ENCODE measurements at regions of chr6 and their contacts with region 1.

Region 1: GRCh38 chr6:135002229-135002844 is 52.3 kb downstream of the HBS1L start:
- DNase-seq: no peak
- ATAC-seq: peak; percentile 64
- H3K4me3 ChIP-seq: no peak overlapping the region; the same call in 1 of the 2 replicates
- H3K27ac ChIP-seq: peak overlapping the region; percentile 88
- H3K4me1 ChIP-seq: peaks cover 11% of the 10 kb centered on the region
- H3K27me3 ChIP-seq: no peaks in the 10 kb centered on the region
- CTCF ChIP-seq: peak; percentile 42 to 45 (median 44); a peak in 4 of 6 replicates
- EP300 ChIP-seq: no peak
- POLR2A ChIP-seq: no peak
- RAD21 ChIP-seq: peak; percentile 65

Region 2: DNA sequence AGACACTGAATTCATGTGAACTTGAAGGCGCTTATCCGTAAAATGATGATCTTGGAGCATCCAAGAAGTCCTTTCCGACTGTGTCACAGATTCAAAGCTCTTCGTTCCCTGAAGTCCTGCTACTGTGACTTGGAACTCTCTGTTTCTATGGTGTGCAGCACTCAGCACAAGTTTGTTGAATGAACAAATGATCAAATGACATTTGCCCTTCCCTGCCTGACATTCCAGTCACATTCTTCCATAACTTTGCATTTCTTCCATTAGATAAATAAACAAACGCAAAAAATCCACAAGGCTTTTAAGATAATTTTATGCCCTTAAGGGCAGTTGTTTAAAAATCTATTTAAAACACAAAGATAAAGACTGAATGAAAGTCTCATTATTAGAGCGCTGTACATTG is 724.3 kb before region 1 on chr6:
- CTCF ChIA-PET with region 1: no interaction called
- POLR2A ChIA-PET with region 1: no interaction called
- RAD21 ChIA-PET with region 1: no interaction called
- SMC1A ChIA-PET with region 1: no interaction called
- in situ Hi-C with region 1: no loop called
- intact Hi-C with region 1: no loop called
- DNase-seq: no peak
- ATAC-seq: no peak
- H3K4me3 ChIP-seq: no peak overlapping the region
- H3K27ac ChIP-seq: no peak overlapping the region
- H3K4me1 ChIP-seq: peaks cover 3% of the 10 kb centered on the region; the same call in 1 of the 2 replicates
- H3K27me3 ChIP-seq: no peaks in the 10 kb centered on the region
- CTCF ChIP-seq: no peak
- EP300 ChIP-seq: no peak
- POLR2A ChIP-seq: no peak
- RAD21 ChIP-seq: no peak

Region 3: DNA sequence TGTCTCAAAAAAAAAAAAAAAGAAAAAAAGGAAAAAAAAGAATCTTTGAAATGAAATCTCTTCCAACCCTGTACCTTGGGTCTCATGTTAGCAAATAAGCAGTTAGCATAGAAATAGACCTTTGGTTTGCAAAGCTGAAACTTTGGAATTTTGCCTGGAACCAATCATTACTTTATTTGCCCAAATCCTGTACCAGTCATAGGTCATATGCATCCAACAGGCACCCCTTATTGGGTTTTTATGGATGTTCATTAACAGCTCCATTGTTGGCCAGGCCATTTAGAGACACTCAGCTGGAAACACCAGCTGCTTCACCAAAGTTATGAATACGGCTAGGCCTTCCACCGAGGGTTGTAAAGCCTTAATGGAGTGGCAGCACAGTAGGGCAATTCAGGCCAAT is 105.4 kb before region 1 on chr6:
- CTCF ChIA-PET with region 1: no interaction called
- POLR2A ChIA-PET with region 1: no interaction called
- RAD21 ChIA-PET with region 1: no interaction called
- SMC1A ChIA-PET with region 1: no interaction called
- in situ Hi-C with region 1: no loop called
- intact Hi-C with region 1: no loop called
- DNase-seq: no peak
- ATAC-seq: no peak
- H3K4me3 ChIP-seq: no peak overlapping the region
- H3K27ac ChIP-seq: no peak overlapping the region
- H3K4me1 ChIP-seq: no peaks in the 10 kb centered on the region
- H3K27me3 ChIP-seq: no peaks in the 10 kb centered on the region; a peak in 1 of 4 replicates
- CTCF ChIP-seq: no peak
- EP300 ChIP-seq: no peak
- POLR2A ChIP-seq: no peak
- RAD21 ChIP-seq: no peak

Region 4: DNA sequence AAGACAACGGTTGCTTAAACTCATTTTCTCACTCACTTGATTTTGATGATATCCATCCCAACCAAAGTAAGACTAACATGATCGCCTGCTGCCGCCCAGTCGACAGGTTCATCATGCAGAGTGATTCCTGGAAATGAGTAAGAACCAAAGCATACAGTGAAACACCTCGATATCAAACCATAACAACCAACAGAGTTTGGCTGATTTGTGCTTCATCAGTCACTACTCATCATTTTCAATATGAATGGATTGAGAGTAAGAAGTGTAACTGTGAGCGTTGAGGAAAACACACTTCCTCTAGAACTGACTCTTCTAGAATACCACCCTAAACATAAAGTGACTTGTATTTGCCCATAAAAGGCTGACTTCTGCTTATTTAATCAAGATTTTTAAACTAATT is 23.2 kb before region 1 on chr6:
- CTCF ChIA-PET with region 1: interaction called, 3 read pairs
- POLR2A ChIA-PET with region 1: no interaction called
- RAD21 ChIA-PET with region 1: no interaction called
- SMC1A ChIA-PET with region 1: no interaction called
- in situ Hi-C with region 1: no loop called
- intact Hi-C with region 1: loop called (anchors 2 kb)
- DNase-seq: peak; percentile 47
- ATAC-seq: peak; percentile 95
- H3K4me3 ChIP-seq: no peak overlapping the region
- H3K27ac ChIP-seq: peak overlapping the region; percentile 40; the same call in 1 of the 2 replicates
- H3K4me1 ChIP-seq: peaks cover 12% of the 10 kb centered on the region; the same call in 1 of the 2 replicates
- H3K27me3 ChIP-seq: no peaks in the 10 kb centered on the region
- CTCF ChIP-seq: no peak
- EP300 ChIP-seq: peak; percentile 53 to 88; a peak in 2 of 4 replicates
- POLR2A ChIP-seq: no peak
- RAD21 ChIP-seq: no peak

Region 5: GRCh38 chr6:135030056-135030473 is 27.7 kb after region 1 on chr6:
- CTCF ChIA-PET with region 1: interaction called, 4 read pairs
- POLR2A ChIA-PET with region 1: interaction called, 3 read pairs
- RAD21 ChIA-PET with region 1: interaction called, 11 read pairs
- SMC1A ChIA-PET with region 1: interaction called, 18 read pairs
- in situ Hi-C with region 1: no loop called
- intact Hi-C with region 1: loop called (anchors 2 kb)
- DNase-seq: peak; percentile 86
- ATAC-seq: peak; percentile 97
- H3K4me3 ChIP-seq: 0 out of 2 replicates have a peak overlapping the region, but pooled peaks have one; percentile 19
- H3K27ac ChIP-seq: peak overlapping the region; percentile 76
- H3K4me1 ChIP-seq: peaks cover 22% of the 10 kb centered on the region
- H3K27me3 ChIP-seq: no peaks in the 10 kb centered on the region
- CTCF ChIP-seq: no peak
- EP300 ChIP-seq: peak; percentile 84 to 86; a peak in 3 of 4 replicates
- POLR2A ChIP-seq: no peak
- RAD21 ChIP-seq: 0 out of 2 replicates have a peak, but pooled peaks have one; percentile 11

Region 6: GRCh38 chr6:135054569-135055498 is 52.5 kb after region 1 on chr6 and contains the start of gene HBS1L:
- CTCF ChIA-PET with region 1: interaction called, 10 read pairs
- POLR2A ChIA-PET with region 1: interaction called, 8 read pairs
- RAD21 ChIA-PET with region 1: interaction called, 15 read pairs
- SMC1A ChIA-PET with region 1: interaction called, 21 read pairs
- in situ Hi-C with region 1: no loop called
- intact Hi-C with region 1: no loop called
- DNase-seq: peak; percentile 98
- ATAC-seq: peak; percentile 98
- H3K4me3 ChIP-seq: peak within 1 kb of the TSS; percentile 89
- H3K27ac ChIP-seq: peak within 1 kb of the TSS; percentile 94
- H3K4me1 ChIP-seq: no peaks in the 10 kb centered on the region
- H3K27me3 ChIP-seq: no peaks in the 10 kb centered on the region
- CTCF ChIP-seq: no peak
- EP300 ChIP-seq: no peak; a peak in 1 of 4 replicates
- POLR2A ChIP-seq: peak; percentile 96
- RAD21 ChIP-seq: no peak
- polyA plus RNA-seq, gene HBS1L: 58.7 to 83.6 TPM

Region 7: DNA sequence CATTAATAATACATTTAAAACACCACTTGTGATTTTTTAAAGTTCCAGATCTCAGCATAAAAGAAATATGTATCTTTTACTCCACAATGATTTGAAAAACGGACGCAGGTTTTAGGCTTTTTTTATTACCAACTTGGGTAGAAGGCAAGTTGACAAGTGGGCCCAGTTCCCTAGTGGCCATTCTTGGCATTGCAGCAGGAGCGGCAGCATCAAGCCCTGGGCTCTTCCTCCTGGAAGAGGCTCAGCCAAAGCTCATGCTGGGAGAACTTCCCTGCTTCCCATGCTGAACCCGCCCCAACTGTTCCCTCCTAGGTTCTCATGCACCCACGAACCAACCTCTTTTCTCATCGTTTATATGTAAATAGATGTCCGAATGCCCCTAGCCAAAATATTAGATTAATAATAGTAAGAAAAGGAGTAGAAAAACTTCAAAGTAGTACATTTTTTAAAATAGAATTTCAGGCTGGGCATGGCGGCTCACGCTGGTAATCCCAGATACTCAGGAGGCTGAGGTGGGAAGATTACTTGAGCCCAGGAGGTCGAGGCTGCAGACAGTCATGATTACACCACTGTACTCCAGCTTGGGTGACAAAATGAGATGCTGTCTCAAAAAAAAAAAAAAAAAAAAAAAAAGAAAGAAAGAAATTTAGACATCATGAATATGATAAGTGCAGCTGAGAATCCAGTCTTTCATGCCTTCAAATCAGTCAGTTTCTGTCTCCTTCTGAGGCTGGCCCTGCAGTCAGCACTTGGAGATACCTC is 160.5 kb after region 1 on chr6:
- CTCF ChIA-PET with region 1: interaction called, 8 read pairs
- POLR2A ChIA-PET with region 1: no interaction called
- RAD21 ChIA-PET with region 1: interaction called, 3 read pairs
- SMC1A ChIA-PET with region 1: interaction called, 4 read pairs
- in situ Hi-C with region 1: no loop called
- intact Hi-C with region 1: loop called (anchors 1 kb)
- DNase-seq: no peak
- ATAC-seq: peak; percentile 65
- H3K4me3 ChIP-seq: peak overlapping the region; percentile 49; the same call in 1 of the 2 replicates
- H3K27ac ChIP-seq: peak overlapping the region; percentile 75
- H3K4me1 ChIP-seq: peaks cover 28% of the 10 kb centered on the region
- H3K27me3 ChIP-seq: no peaks in the 10 kb centered on the region
- CTCF ChIP-seq: peak; percentile 64 to 93 (median 93)
- EP300 ChIP-seq: no peak
- POLR2A ChIP-seq: no peak; the same call in 1 of the 2 replicates
- RAD21 ChIP-seq: peak; percentile 51

Region 8: GRCh38 chr6:135251964-135252429 is 249.7 kb after region 1 on chr6:
- CTCF ChIA-PET with region 1: no interaction called
- POLR2A ChIA-PET with region 1: no interaction called
- RAD21 ChIA-PET with region 1: no interaction called
- SMC1A ChIA-PET with region 1: no interaction called
- in situ Hi-C with region 1: no loop called
- intact Hi-C with region 1: no loop called
- DNase-seq: no peak
- ATAC-seq: no peak
- H3K4me3 ChIP-seq: no peak overlapping the region
- H3K27ac ChIP-seq: no peak overlapping the region
- H3K4me1 ChIP-seq: no peaks in the 10 kb centered on the region; the same call in 1 of the 2 replicates
- H3K27me3 ChIP-seq: no peaks in the 10 kb centered on the region
- CTCF ChIP-seq: no peak
- EP300 ChIP-seq: no peak
- POLR2A ChIP-seq: no peak
- RAD21 ChIP-seq: no peak

Region 9: GRCh38 chr6:136289579-136290409 is 1287.5 kb after region 1 on chr6 and contains the start of gene BCLAF1:
- CTCF ChIA-PET with region 1: no interaction called
- POLR2A ChIA-PET with region 1: no interaction called
- RAD21 ChIA-PET with region 1: no interaction called
- SMC1A ChIA-PET with region 1: no interaction called
- in situ Hi-C with region 1: loop called (anchors 25 kb)
- intact Hi-C with region 1: no loop called
- DNase-seq: peak; percentile 98
- ATAC-seq: peak; percentile 93
- H3K4me3 ChIP-seq: peak within 1 kb of the TSS; percentile 72
- H3K27ac ChIP-seq: peak within 1 kb of the TSS; percentile 100
- H3K4me1 ChIP-seq: peaks cover 10% of the 10 kb centered on the region; the same call in 1 of the 2 replicates
- H3K27me3 ChIP-seq: no peaks in the 10 kb centered on the region; a peak in 1 of 4 replicates
- CTCF ChIP-seq: no peak
- EP300 ChIP-seq: 0 out of 4 replicates have a peak, but pooled peaks of 1 of the 2 experiments have one; percentile 21
- POLR2A ChIP-seq: peak; percentile 97
- RAD21 ChIP-seq: no peak
- polyA plus RNA-seq, gene BCLAF1: 56.0 to 62.1 TPM

Measured in GM12878 (cell line).